ENCODE measurements at regions of chr17 and their contacts with region 1.

Region 1: DNA sequence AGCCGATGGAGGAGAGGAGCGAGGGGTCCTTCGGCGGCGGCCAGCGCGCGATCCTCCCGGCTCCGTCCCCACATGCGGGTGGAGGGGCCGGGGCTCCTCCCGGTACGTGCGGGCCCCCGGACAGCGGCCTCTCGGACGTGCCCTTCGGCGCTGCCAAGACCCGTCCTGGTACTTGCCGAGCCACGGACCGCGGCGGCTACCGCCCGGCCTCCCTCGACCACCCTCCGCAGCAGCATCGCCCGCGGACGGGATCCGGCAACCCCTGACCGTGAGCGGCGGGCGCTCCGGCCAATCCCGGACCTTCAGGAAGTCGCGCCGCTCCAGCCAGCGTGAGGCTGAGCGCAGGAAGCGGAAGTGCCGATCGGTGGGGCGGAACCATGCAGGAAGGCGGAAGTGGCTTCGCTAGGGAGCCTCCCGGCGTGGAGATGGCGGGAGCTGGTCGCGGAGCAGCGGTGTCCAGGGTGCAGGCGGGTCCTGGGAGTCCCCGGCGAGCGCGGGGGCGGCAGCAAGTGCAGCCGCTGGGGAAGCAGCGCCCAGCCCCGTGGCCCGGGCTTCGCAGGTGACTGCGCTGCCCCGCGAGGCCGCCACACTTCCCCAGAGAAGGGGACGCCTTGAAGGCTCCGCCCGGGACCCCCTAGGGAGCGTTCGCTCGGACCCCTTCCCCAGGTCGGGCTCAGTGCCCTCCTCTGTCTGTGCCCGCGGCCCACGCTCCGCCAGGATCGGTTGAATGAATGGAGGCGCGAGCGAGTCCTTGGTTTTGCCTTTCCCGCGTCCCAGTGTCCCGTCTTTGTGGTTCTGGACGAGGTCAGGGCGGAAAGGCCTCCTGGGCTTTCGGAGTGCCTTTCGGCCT is at the starts of genes CCDC137 and OXLD1:
- DNase-seq: peak; percentile 82 to 93 (median 89)
- ATAC-seq: peak; percentile 94
- H3K4me3 ChIP-seq: peak within 1 kb of the TSS; percentile 86
- H3K4me3 Mint-ChIP-seq: peak within 1 kb of the TSS; percentile 88 to 99 (median 94)
- H3K27ac ChIP-seq: peak within 1 kb of the TSS; percentile 93
- H3K27ac Mint-ChIP-seq: peak within 1 kb of the TSS; percentile 84 to 97 (median 92)
- H3K4me1 ChIP-seq: peaks cover 35 to 50% of the 10 kb centered on the region in 2 donors
- H3K4me1 Mint-ChIP-seq: peaks cover 17 to 62% (median 43%) of the 10 kb centered on the region in 7 donors
- H3K27me3 ChIP-seq: no peaks in the 10 kb centered on the region
- H3K27me3 Mint-ChIP-seq: no peaks in the 10 kb centered on the region
- total RNA-seq, gene CCDC137: 16.3 to 33.5 (median 27.1) TPM
- total RNA-seq, gene OXLD1: 35.9 to 61.9 (median 47.5) TPM

Region 2: DNA sequence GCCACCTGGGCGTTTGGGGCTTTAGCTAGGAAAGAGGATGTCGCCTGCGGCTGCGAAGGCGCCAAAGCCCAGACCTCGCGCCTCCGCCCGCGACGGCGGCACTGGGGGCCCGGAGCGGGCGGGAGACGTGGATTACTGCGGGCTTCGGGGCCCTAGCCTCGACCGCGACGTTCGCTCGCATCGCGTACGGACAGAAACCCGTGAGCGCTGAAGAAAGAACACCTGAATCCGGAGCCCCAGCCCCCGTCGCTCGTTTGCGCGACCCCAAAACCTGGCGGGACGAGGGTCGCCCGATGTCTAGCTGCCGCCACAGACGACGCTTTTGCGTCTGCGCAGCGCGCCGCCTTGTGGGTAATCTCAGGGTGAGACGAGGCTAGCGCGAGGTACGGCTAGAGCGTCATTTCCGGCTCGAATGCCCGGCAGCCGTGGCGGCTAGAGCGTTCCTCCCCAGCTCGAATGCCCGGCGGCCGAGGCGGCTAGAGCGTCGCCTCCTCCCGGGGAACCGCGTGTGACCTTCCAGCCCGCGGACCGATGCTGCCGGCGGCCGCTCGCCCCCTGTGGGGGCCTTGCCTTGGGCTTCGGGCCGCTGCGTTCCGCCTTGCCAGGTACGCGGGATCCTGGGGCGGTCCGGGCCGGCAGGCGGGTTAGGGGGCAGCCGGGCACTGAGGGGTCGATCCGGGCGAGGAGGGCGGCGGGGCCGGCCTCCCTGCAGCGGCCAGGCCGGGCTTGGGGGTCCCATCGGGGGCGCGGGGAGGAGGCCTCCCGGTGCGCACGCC is 36.6 kb after region 1 on chr17 and contains the start of gene MRPL12:
- CTCF ChIA-PET with region 1: interaction called, 6 read pairs
- POLR2A ChIA-PET with region 1: interaction called, 12 read pairs
- intact Hi-C with region 1: loop called (anchors 1 to 5 kb)
- DNase-seq: peak; percentile 75 to 87 (median 84)
- ATAC-seq: peak; percentile 96
- H3K4me3 ChIP-seq: peak within 1 kb of the TSS; percentile 91
- H3K4me3 Mint-ChIP-seq: peak within 1 kb of the TSS; percentile 83 to 94 (median 90)
- H3K27ac ChIP-seq: peak within 1 kb of the TSS; percentile 95
- H3K27ac Mint-ChIP-seq: peak within 1 kb of the TSS; percentile 84 to 96 (median 92)
- H3K4me1 ChIP-seq: peaks cover 23 to 24% of the 10 kb centered on the region in 2 donors
- H3K4me1 Mint-ChIP-seq: peaks cover 21 to 38% (median 26%) of the 10 kb centered on the region in 7 donors
- H3K27me3 ChIP-seq: no peaks in the 10 kb centered on the region
- H3K27me3 Mint-ChIP-seq: no peaks in the 10 kb centered on the region
- total RNA-seq, gene MRPL12: 21.3 to 83.8 (median 26.6) TPM